ENCODE measurements at regions of chr10 and their contacts with region 1.

Region 1: GRCh38 chr10:12656518-12657142 is 307.3 kb downstream of the CAMK1D start:
- DNase-seq: peak in 3 of 35 experiments; percentile 10 to 67 (median 12)
- ATAC-seq: peak; percentile 57 to 68 (median 62)
- H3K4me3 ChIP-seq: no peak overlapping the region
- H3K4me3 Mint-ChIP-seq: no peak overlapping the region
- H3K27ac ChIP-seq: no peak overlapping the region
- H3K27ac Mint-ChIP-seq: no peak overlapping the region
- H3K4me1 ChIP-seq: peaks cover 0 to 5% of the 10 kb centered on the region in 2 experiments
- H3K4me1 Mint-ChIP-seq: peaks cover 6 to 7% (median 7%) of the 10 kb centered on the region in 3 donors
- H3K27me3 ChIP-seq: no peaks in the 10 kb centered on the region
- H3K27me3 Mint-ChIP-seq: no peaks in the 10 kb centered on the region

Region 2: GRCh38 chr10:12195603-12196506 is 460.8 kb before region 1 on chr10 and contains the starts of genes CDC123 and NUDT5:
- CTCF ChIA-PET with region 1: interaction called in 1 of 2 experiments, 11 read pairs
- POLR2A ChIA-PET with region 1: no interaction called
- DNase-seq: peak; percentile 70 to 91 (median 81)
- ATAC-seq: peak; percentile 92 to 95 (median 94)
- H3K4me3 ChIP-seq: peak within 1 kb of the TSS; percentile 78 to 91
- H3K4me3 Mint-ChIP-seq: peak within 1 kb of the TSS; percentile 95 to 100 (median 96)
- H3K27ac ChIP-seq: peak within 1 kb of the TSS; percentile 90
- H3K27ac Mint-ChIP-seq: peak within 1 kb of the TSS; percentile 99 to 100
- H3K4me1 ChIP-seq: peaks cover 16 to 19% of the 10 kb centered on the region in 2 experiments
- H3K4me1 Mint-ChIP-seq: peaks cover 42 to 72% (median 57%) of the 10 kb centered on the region in 3 donors
- H3K27me3 ChIP-seq: no peaks in the 10 kb centered on the region
- H3K27me3 Mint-ChIP-seq: no peaks in the 10 kb centered on the region
- total RNA-seq, gene CDC123: 35.5 to 48.6 (median 43.7) TPM
- total RNA-seq, gene NUDT5: 32.1 to 54.0 (median 50.3) TPM

Region 3: GRCh38 chr10:12264204-12264940 is 392.3 kb before region 1 on chr10:
- CTCF ChIA-PET with region 1: interaction called, 7 to 68 read pairs
- POLR2A ChIA-PET with region 1: no interaction called
- DNase-seq: peak; percentile 30 to 79 (median 59)
- ATAC-seq: peak; percentile 82 to 87 (median 86)
- H3K4me3 ChIP-seq: peak overlapping the region; percentile 26 to 77
- H3K4me3 Mint-ChIP-seq: peak overlapping the region; percentile 52 to 78 (median 64)
- H3K27ac ChIP-seq: no peak overlapping the region
- H3K27ac Mint-ChIP-seq: peak overlapping the region in 1 of 2 donors; percentile 25
- H3K4me1 ChIP-seq: peaks cover 2 to 17% of the 10 kb centered on the region in 2 experiments
- H3K4me1 Mint-ChIP-seq: peaks cover 5 to 30% (median 18%) of the 10 kb centered on the region in 3 donors
- H3K27me3 ChIP-seq: no peaks in the 10 kb centered on the region
- H3K27me3 Mint-ChIP-seq: no peaks in the 10 kb centered on the region

Region 4: DNA sequence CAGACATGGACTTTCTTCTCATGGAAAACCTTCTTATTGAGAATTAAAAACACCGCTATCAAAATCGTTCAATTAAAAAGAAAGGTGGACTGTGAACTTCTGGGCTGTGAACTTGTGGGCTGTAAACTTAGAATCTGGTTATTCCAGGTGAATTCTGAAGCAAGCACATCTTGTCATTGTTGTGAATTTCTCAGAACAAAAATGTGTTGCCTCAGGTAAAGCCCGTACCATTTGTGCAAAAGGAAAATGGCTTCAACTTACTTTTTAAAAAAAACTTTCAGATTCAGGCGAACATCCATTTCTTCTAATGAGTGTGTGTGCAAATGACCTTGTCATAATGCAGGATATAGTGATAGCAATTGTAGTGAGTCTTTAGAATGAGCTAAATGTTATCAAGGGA is 161.6 kb before region 1 on chr10:
- CTCF ChIA-PET with region 1: no interaction called
- POLR2A ChIA-PET with region 1: no interaction called
- DNase-seq: no peak
- ATAC-seq: no peak
- H3K4me3 ChIP-seq: no peak overlapping the region
- H3K4me3 Mint-ChIP-seq: no peak overlapping the region
- H3K27ac ChIP-seq: no peak overlapping the region
- H3K27ac Mint-ChIP-seq: no peak overlapping the region
- H3K4me1 ChIP-seq: peaks cover 0 to 7% of the 10 kb centered on the region in 2 experiments
- H3K4me1 Mint-ChIP-seq: peaks cover 33 to 41% (median 40%) of the 10 kb centered on the region in 3 donors
- H3K27me3 ChIP-seq: no peaks in the 10 kb centered on the region
- H3K27me3 Mint-ChIP-seq: no peaks in the 10 kb centered on the region

Region 5: GRCh38 chr10:12710594-12711349 is 54.1 kb after region 1 on chr10:
- CTCF ChIA-PET with region 1: interaction called, 5 to 14 read pairs
- POLR2A ChIA-PET with region 1: interaction called in 1 of 2 experiments, 3 read pairs
- DNase-seq: peak; percentile 48 to 83 (median 67)
- ATAC-seq: peak; percentile 77 to 84 (median 78)
- H3K4me3 ChIP-seq: no peak overlapping the region
- H3K4me3 Mint-ChIP-seq: no peak overlapping the region
- H3K27ac ChIP-seq: no peak overlapping the region
- H3K27ac Mint-ChIP-seq: peak overlapping the region in 1 of 2 donors; percentile 61
- H3K4me1 ChIP-seq: peaks cover 0 to 2% of the 10 kb centered on the region in 2 experiments
- H3K4me1 Mint-ChIP-seq: peaks cover 6 to 9% (median 9%) of the 10 kb centered on the region in 3 donors
- H3K27me3 ChIP-seq: no peaks in the 10 kb centered on the region
- H3K27me3 Mint-ChIP-seq: no peaks in the 10 kb centered on the region

Measured in T-cell (primary cell).